ENCODE measurements at regions of chr11 and their contacts with region 1.

Region 1: DNA sequence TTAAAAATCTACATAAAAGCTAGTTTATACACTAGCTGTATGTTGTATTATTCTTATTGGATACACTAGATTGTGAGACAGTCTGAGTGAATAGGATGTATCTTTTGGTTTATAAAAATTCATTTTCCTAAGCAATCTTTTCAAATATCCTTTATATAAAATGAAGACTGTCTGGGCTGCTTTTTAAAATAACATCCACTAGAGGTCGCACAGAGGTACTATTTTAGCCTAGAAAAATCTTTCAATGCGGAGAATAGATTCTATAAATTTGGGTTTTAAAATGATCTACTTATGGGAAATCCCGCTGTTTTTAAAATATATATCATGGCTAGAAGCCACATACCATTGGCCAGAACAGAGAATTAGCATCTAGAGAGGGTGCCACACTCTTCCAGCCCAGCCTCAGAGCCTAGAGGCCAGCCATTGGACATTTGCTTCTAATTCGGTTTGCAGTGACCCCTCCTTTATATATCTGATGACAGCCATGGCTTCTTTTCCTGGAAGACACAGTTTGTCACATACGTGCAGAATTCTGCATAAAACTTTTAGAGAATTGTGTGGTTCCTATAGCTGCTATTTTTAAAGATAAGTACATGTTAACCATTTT is 7.3 kb downstream of the C11orf97 start:
- DNase-seq: no peak
- H3K4me3 ChIP-seq: no peak overlapping the region
- H3K27ac ChIP-seq: peak overlapping the region in 1 of 2 donors; percentile 16
- H3K4me1 ChIP-seq: no peaks in the 10 kb centered on the region
- H3K27me3 ChIP-seq: no peaks in the 10 kb centered on the region
- CTCF ChIP-seq: peak; percentile 50 to 71 (median 53)

Region 2: GRCh38 chr11:94563176-94563847 is 43.7 kb after region 1 on chr11:
- intact Hi-C with region 1: loop called (anchors 1 kb)
- DNase-seq: no peak
- H3K4me3 ChIP-seq: no peak overlapping the region
- H3K27ac ChIP-seq: no peak overlapping the region
- H3K4me1 ChIP-seq: peaks cover 2 to 22% of the 10 kb centered on the region in 2 donors
- H3K27me3 ChIP-seq: no peaks in the 10 kb centered on the region
- CTCF ChIP-seq: peak; percentile 31 to 57 (median 34)